Prostate gland (tissue), 2 donors: ENCODE measurements at regions of chr6 and their contacts with region 1.

Region 1: GRCh38 chr6:21679761-21680265 is 86.3 kb downstream of the SOX4 start:
- DNase-seq: no peak
- H3K4me3 ChIP-seq: no peak overlapping the region
- H3K27ac ChIP-seq: no peak overlapping the region
- H3K4me1 ChIP-seq: no peaks in the 10 kb centered on the region
- H3K27me3 ChIP-seq: no peaks in the 10 kb centered on the region
- CTCF ChIP-seq: no peak
- POLR2A ChIP-seq: no peak

Region 2: DNA sequence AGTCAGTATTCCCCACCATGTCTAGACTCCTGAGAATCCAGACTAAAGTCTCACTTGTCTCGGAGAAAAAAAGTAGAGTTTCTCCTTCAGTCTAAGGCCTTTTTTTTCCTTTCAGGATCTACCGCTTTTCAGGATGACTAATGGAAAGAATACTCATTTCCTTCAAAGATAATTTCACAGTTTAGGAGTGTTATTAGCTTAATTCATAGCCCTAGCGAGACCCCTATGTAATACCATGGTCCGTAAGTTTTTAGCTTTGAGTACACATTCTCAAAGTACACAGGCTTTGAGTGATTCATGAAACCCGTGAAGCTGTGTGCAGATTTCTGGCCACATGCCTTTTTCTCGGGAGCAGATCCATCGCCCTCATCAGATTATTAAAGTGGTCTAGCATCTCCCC is 46.9 kb after region 1 on chr6:
- intact Hi-C with region 1: loop called (anchors 5 kb)
- DNase-seq: no peak
- H3K4me3 ChIP-seq: no peak overlapping the region
- H3K27ac ChIP-seq: no peak overlapping the region
- H3K4me1 ChIP-seq: no peaks in the 10 kb centered on the region
- H3K27me3 ChIP-seq: no peaks in the 10 kb centered on the region
- CTCF ChIP-seq: no peak
- POLR2A ChIP-seq: no peak